Common myeloid progenitor, CD34-positive (primary cell): ENCODE measurements at regions of chr10 and their contacts with region 1.

Region 1: DNA sequence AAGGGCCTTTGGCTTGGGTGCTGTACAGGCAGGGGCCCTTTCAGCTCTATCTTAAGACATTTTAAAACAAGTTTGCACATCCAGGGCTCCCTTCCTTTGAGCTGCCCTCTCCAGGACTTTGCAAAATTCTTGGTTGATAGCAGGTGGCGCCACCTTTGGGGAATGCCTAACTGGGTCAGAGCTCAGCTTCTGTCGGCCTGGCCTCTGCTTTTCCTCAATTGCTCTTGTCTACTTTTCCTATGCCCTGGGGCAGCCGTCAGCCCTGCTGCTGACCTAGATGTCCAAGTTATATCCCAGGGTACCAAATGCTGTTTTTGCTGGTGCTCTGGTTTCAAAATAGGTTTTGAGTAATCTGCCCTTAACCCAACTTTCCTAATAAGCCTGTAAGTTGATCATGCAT is 65.8 kb downstream of the APBB1IP start:
- DNase-seq: peak in 2 of 3 donors; percentile 35 to 43
- H3K4me3 ChIP-seq: no peak overlapping the region
- H3K27ac ChIP-seq: no peak overlapping the region
- H3K4me1 ChIP-seq: peaks cover 0 to 8% (median 0%) of the 10 kb centered on the region in 4 experiments
- H3K27me3 ChIP-seq: no peaks in the 10 kb centered on the region

Region 2: GRCh38 chr10:26491934-26492333 is 12.0 kb before region 1 on chr10:
- CTCF ChIA-PET with region 1: interaction called, 17 read pairs
- POLR2A ChIA-PET with region 1: no interaction called
- DNase-seq: no peak
- H3K4me3 ChIP-seq: no peak overlapping the region
- H3K27ac ChIP-seq: no peak overlapping the region
- H3K4me1 ChIP-seq: peaks cover 0 to 6% (median 2%) of the 10 kb centered on the region in 4 experiments
- H3K27me3 ChIP-seq: no peaks in the 10 kb centered on the region